ENCODE measurements at regions of chr15 and their contacts with region 1.

Region 1: GRCh38 chr15:55917881-55918296 is 75.5 kb downstream of the NEDD4 start:
- DNase-seq: peak; percentile 23 to 84
- H3K4me3 ChIP-seq: no peak overlapping the region
- H3K27ac ChIP-seq: peak overlapping the region; percentile 58
- H3K4me1 ChIP-seq: peaks cover 9% of the 10 kb centered on the region
- H3K27me3 ChIP-seq: no peaks in the 10 kb centered on the region
- CTCF ChIP-seq: peak; percentile 68

Region 2: DNA sequence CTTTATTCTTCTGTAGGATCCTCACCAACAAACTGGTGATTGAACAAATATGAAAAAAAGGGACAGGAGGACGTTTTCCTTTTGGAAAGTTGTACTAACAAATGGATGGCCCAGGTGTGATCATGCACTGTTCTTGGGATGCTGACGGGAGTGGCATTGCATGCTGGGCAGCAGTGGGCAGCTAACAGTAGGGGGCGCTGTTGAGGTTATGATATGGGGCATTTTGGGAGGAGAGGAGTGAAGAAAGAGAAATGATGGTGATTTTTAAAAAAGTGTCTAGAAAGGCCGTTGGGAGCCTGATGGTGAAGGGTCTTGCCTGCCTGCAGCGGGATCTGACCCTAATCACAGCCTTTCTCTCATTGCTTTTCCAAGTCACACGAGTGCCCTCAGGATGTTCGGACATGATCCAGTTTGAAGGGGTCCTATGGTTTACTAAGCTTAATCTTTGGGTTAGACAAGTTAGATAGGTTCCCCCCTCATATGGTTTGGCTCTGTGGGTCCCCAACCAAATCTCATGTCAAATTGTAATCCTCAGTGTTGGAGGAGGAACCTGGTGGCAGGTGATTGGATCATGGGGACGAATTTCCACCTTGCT is 128.7 kb before region 1 on chr15:
- CTCF ChIA-PET with region 1: interaction called, 11 read pairs
- POLR2A ChIA-PET with region 1: no interaction called
- intact Hi-C with region 1: no loop called
- DNase-seq: no peak
- H3K4me3 ChIP-seq: no peak overlapping the region
- H3K27ac ChIP-seq: no peak overlapping the region
- H3K4me1 ChIP-seq: peaks cover 28% of the 10 kb centered on the region
- H3K27me3 ChIP-seq: no peaks in the 10 kb centered on the region
- CTCF ChIP-seq: peak; percentile 48

Region 3: DNA sequence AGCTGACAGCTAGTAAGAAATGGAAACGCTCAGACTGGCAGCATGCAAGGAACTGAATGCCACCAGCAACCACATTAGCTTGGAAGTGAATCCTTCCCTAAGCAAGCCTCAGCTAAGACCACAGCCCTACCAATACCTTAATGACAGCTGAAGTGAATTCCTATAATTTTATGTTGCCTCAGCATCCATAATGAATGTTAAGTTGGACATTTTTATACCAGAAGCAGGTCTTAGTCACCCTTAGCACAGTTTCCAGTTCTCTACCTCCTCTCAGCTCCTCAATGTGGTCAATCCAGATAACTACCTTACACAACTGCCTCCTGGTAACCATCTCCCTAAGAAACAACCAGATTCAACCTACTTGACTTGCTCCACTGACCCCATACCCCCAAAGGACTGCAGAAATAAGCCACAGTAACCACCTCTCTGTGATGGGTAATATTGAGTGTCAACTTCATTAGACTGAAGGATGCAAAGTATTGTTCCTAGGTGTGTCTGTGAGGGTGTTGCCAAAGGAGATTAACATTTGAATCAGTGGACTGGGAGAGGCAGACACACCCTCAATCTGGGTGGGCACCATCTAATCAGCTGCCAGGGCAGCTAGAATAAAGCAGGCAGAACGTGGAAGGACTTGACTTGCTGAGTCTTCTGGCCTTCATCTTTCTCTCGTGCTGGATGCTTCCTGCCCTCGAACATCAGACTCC is 42.0 kb after region 1 on chr15:
- CTCF ChIA-PET with region 1: interaction called, 11 read pairs
- POLR2A ChIA-PET with region 1: interaction called, 3 read pairs
- intact Hi-C with region 1: no loop called
- DNase-seq: no peak
- H3K4me3 ChIP-seq: no peak overlapping the region
- H3K27ac ChIP-seq: no peak overlapping the region
- H3K4me1 ChIP-seq: no peaks in the 10 kb centered on the region
- H3K27me3 ChIP-seq: no peaks in the 10 kb centered on the region
- CTCF ChIP-seq: no peak

Region 4: GRCh38 chr15:56040081-56041035 is 122.5 kb after region 1 on chr15:
- CTCF ChIA-PET with region 1: no interaction called
- POLR2A ChIA-PET with region 1: no interaction called
- intact Hi-C with region 1: loop called (anchors 5 kb)
- DNase-seq: peak; percentile 70 to 86
- H3K4me3 ChIP-seq: no peak overlapping the region
- H3K27ac ChIP-seq: peak overlapping the region; percentile 96
- H3K4me1 ChIP-seq: peaks cover 57% of the 10 kb centered on the region
- H3K27me3 ChIP-seq: no peaks in the 10 kb centered on the region
- CTCF ChIP-seq: no peak